ENCODE measurements at regions of chr20 and their contacts with region 1.

Region 1: DNA sequence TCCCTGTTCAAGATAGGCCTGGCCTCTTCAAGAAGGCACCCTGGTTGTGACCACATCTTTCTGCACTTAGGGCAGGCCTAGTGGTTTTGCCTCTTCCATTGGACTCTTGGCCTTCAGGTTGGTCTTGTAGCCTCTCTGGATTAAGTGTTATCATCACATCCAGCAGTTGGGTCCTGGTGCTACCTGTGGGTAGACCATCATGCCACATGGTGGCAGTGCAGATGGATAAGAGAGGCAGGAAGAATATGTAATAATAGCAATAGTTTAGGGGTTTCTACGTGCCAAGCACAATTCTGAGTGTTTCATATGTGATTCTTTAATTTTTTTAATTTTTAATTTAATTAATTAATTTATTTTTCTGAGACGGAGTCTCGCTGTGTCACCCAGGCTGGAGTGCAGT is 28.5 kb upstream of the SNRPB2 start:
- DNase-seq: no peak
- H3K4me3 ChIP-seq: no peak overlapping the region
- H3K27ac ChIP-seq: no peak overlapping the region
- H3K4me1 ChIP-seq: no peaks in the 10 kb centered on the region
- H3K27me3 ChIP-seq: no peaks in the 10 kb centered on the region
- CTCF ChIP-seq: peak; percentile 43; the same call in 1 of the 2 replicates

Region 2: GRCh38 chr20:14820771-14821170 is 1880.5 kb before region 1 on chr20:
- CTCF ChIA-PET with region 1: no interaction called
- POLR2A ChIA-PET with region 1: interaction called, 13 read pairs
- intact Hi-C with region 1: no loop called
- DNase-seq: no peak
- H3K4me3 ChIP-seq: no peak overlapping the region
- H3K27ac ChIP-seq: no peak overlapping the region
- H3K4me1 ChIP-seq: no peaks in the 10 kb centered on the region
- H3K27me3 ChIP-seq: no peaks in the 10 kb centered on the region
- CTCF ChIP-seq: no peak

Region 3: GRCh38 chr20:16747291-16747827 is 46.1 kb after region 1 on chr20:
- CTCF ChIA-PET with region 1: no interaction called
- POLR2A ChIA-PET with region 1: no interaction called
- intact Hi-C with region 1: no loop called
- DNase-seq: no peak
- H3K4me3 ChIP-seq: no peak overlapping the region
- H3K27ac ChIP-seq: no peak overlapping the region
- H3K4me1 ChIP-seq: no peaks in the 10 kb centered on the region
- H3K27me3 ChIP-seq: no peaks in the 10 kb centered on the region
- CTCF ChIP-seq: no peak; the same call in 1 of the 2 replicates

Measured in PC-9 (cell line).